GM12878 (cell line): ENCODE measurements at regions of chr10 and their contacts with region 1.

Region 1: DNA sequence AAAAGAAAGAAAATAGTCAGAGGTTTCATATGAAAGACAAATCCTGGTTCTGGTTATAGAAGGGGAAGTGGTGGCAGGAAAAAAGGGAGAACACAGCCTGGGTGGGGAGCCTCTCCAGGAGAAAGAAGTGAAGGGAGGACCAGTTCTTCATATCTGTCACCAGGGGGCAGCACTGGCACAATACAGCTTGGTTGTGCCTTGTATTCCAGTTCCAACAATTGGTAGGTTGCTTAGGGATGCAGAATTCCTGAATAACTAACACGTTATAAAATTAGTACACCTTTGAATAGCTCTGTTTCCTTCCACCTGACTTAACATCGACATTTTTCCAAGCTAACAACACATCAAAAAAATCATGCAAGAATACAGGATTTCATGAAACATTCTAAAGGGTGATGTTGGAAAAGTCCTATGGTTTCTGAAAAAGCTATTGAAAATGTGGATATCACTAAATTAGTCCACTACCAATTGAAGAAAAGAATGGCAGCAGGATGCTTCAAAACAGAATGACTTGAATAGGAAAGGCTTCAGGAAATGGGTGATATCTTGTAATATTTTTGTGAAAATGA is 52.9 kb downstream of the CYP26A1 start:
- DNase-seq: no peak
- ATAC-seq: no peak
- H3K4me3 ChIP-seq: no peak overlapping the region
- H3K27ac ChIP-seq: no peak overlapping the region
- H3K4me1 ChIP-seq: peaks cover 22% of the 10 kb centered on the region
- H3K27me3 ChIP-seq: no peaks in the 10 kb centered on the region
- CTCF ChIP-seq: peak in 2 of 3 experiments; percentile 24 to 45; a peak in 3 of 6 replicates
- EP300 ChIP-seq: no peak
- POLR2A ChIP-seq: no peak
- RAD21 ChIP-seq: no peak

Region 2: GRCh38 chr10:93115661-93116383 is 10.7 kb before region 1 on chr10:
- CTCF ChIA-PET with region 1: interaction called, 11 read pairs
- POLR2A ChIA-PET with region 1: no interaction called
- RAD21 ChIA-PET with region 1: no interaction called
- SMC1A ChIA-PET with region 1: interaction called, 5 read pairs
- in situ Hi-C with region 1: no loop called
- intact Hi-C with region 1: no loop called
- DNase-seq: peak; percentile 32
- ATAC-seq: peak; percentile 96
- H3K4me3 ChIP-seq: no peak overlapping the region
- H3K27ac ChIP-seq: no peak overlapping the region
- H3K4me1 ChIP-seq: peaks cover 8% of the 10 kb centered on the region; the same call in 1 of the 2 replicates
- H3K27me3 ChIP-seq: no peaks in the 10 kb centered on the region
- CTCF ChIP-seq: peak; percentile 61 to 72 (median 62)
- EP300 ChIP-seq: no peak
- POLR2A ChIP-seq: no peak
- RAD21 ChIP-seq: peak; percentile 83

Region 3: DNA sequence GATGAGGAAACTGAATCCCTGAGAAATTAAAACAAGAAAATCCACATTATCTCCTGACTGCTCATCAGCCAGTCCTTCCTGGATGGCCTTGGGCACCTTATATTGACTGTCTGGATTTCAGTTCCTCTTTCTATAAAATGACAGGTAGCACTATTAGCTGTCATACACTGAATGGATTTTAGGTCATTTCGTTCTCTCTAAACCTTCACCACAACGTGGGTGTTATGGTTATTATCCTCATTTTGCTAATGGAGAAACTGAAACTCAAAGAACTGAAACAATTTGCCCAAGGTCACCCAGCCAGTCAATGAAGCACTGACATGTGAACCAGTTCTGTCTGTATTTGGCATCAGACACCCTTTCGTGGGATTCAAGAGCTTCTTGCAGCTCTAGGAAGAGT is 141.0 kb after region 1 on chr10:
- CTCF ChIA-PET with region 1: no interaction called
- POLR2A ChIA-PET with region 1: no interaction called
- RAD21 ChIA-PET with region 1: no interaction called
- SMC1A ChIA-PET with region 1: no interaction called
- in situ Hi-C with region 1: no loop called
- intact Hi-C with region 1: loop called (anchors 1 kb)
- DNase-seq: peak; percentile 94
- ATAC-seq: peak; percentile 99
- H3K4me3 ChIP-seq: no peak overlapping the region
- H3K27ac ChIP-seq: peak overlapping the region; percentile 83
- H3K4me1 ChIP-seq: peaks cover 19% of the 10 kb centered on the region
- H3K27me3 ChIP-seq: no peaks in the 10 kb centered on the region; a peak in 1 of 4 replicates
- CTCF ChIP-seq: no peak
- EP300 ChIP-seq: peak; percentile 60 to 96
- POLR2A ChIP-seq: no peak
- RAD21 ChIP-seq: no peak